ENCODE measurements at regions of chr12 and their contacts with region 1.

Region 1: GRCh38 chr12:123232807-123233543 is at the starts of genes MPHOSPH9 and MTRFR:
- DNase-seq: peak; percentile 96 to 100 (median 99)
- ATAC-seq: peak; percentile 86 to 90
- H3K4me3 Mint-ChIP-seq: peak within 1 kb of the TSS; percentile 96 to 100 (median 99)
- H3K27ac Mint-ChIP-seq: peak within 1 kb of the TSS; percentile 98 to 100 (median 99)
- H3K4me1 Mint-ChIP-seq: peaks cover 22 to 86% (median 71%) of the 10 kb centered on the region in 4 donors
- H3K27me3 Mint-ChIP-seq: peaks cover 0 to 2% (median 0%) of the 10 kb centered on the region in 5 donors
- polyA plus RNA-seq, gene MPHOSPH9: 33.9 to 53.4 (median 44.8) TPM
- polyA plus RNA-seq, gene MTRFR: 45.2 to 63.6 (median 56.5) TPM

Region 2: DNA sequence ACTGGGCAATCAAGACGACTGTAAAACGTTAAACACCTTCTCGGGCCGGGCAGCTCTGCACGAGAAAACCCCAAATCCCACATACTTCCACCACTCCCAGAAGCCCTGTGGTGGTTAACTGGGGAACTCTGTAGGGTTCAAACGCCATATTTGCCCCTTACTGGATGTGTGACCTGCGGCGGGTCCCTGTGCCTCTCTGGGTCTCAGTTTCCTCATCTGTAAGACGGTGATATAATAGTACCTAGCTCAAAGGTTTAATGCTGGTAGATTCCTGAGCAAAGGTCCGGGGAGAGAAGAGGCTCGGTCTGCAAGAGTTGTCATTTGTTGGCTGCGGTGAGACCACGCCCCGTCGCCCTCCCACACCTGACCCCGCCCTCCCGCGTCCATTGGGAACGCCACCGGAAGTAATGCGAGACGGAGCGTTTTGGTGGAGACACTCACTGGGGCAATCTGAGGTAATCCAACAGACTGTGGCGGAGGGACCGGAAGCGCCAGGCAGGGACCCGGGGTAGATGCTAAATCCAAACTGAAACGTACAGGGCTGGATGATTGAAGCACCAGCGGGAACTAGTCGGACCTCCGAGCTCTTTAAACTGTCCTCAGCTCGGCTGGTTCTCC is 258.6 kb before region 1 on chr12:
- POLR2A ChIA-PET with region 1: interaction called, 36 read pairs
- DNase-seq: peak; percentile 94 to 99 (median 98)
- ATAC-seq: peak; percentile 82 to 87
- H3K4me3 Mint-ChIP-seq: peak overlapping the region; percentile 92 to 99 (median 98)
- H3K27ac Mint-ChIP-seq: peak overlapping the region; percentile 97 to 100 (median 99)
- H3K4me1 Mint-ChIP-seq: peaks cover 6 to 40% (median 21%) of the 10 kb centered on the region in 4 donors
- H3K27me3 Mint-ChIP-seq: no peaks in the 10 kb centered on the region

Region 3: DNA sequence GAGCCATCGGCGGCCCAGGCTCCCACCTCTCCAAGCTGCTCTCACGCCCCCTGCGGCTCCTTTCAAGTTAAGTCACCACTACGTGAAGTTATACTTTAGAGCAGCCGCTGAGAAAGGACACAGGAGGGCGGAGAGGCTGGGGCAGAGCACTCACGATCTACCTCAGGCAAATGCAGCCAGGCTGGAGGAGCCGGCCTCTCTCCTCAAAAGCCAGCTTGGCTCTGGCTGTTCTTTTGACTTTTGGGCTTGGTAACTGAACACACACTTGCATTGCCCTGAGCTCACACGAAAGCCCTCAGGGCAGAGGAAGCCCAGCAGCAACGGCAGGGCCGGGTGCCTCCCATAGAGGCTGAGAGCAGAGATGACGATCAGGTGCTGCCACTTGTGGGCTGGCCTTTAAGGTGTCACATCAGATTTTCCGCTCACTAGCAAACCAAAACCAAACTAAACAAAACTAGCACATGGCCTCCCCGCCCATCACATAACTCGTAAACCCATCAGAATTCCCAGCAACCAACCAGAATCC is 157.3 kb before region 1 on chr12:
- POLR2A ChIA-PET with region 1: interaction called, 30 read pairs
- DNase-seq: peak; percentile 45 to 88 (median 73)
- ATAC-seq: peak; percentile 82 to 89
- H3K4me3 Mint-ChIP-seq: peak overlapping the region; percentile 82 to 98 (median 94)
- H3K27ac Mint-ChIP-seq: peak overlapping the region; percentile 94 to 99 (median 96)
- H3K4me1 Mint-ChIP-seq: peaks cover 35 to 78% (median 72%) of the 10 kb centered on the region in 4 donors
- H3K27me3 Mint-ChIP-seq: no peaks in the 10 kb centered on the region

Region 4: GRCh38 chr12:123120452-123121166 is 112.4 kb before region 1 on chr12:
- POLR2A ChIA-PET with region 1: interaction called, 32 read pairs
- DNase-seq: peak in 5 of 10 donors; percentile 23 to 77 (median 55)
- ATAC-seq: peak; percentile 61 to 79
- H3K4me3 Mint-ChIP-seq: peak overlapping the region; percentile 44 to 82 (median 66)
- H3K27ac Mint-ChIP-seq: peak overlapping the region; percentile 92 to 97 (median 96)
- H3K4me1 Mint-ChIP-seq: peaks cover 42 to 75% (median 73%) of the 10 kb centered on the region in 4 donors
- H3K27me3 Mint-ChIP-seq: no peaks in the 10 kb centered on the region

Region 5: DNA sequence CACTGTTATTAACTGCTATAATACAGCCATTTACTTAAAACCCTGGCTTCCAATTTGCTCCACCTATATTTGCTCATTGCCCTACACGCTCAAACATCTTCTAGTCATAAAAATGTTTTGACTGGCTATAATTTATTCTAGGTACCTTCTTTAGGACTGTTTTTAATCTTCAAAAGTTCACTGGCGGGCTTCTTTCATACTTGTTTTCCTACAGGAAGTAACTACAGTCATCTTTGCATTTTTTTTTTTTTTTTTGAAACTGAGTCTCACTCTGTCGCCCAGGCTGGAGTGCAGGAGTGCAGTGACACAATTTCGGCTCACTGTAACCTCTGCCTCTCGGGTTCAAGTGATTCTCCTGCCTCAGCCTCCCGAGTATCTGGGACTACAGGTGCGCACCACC is 32.6 kb before region 1 on chr12:
- POLR2A ChIA-PET with region 1: interaction called, 14 read pairs
- DNase-seq: peak in 3 of 10 donors; percentile 10 to 42 (median 31)
- ATAC-seq: peak; percentile 63 to 86
- H3K4me3 Mint-ChIP-seq: peak overlapping the region in 5 of 10 donors; percentile 3 to 59 (median 35)
- H3K27ac Mint-ChIP-seq: peak overlapping the region; percentile 80 to 97 (median 89)
- H3K4me1 Mint-ChIP-seq: peaks cover 5 to 20% (median 17%) of the 10 kb centered on the region in 4 donors
- H3K27me3 Mint-ChIP-seq: no peaks in the 10 kb centered on the region

Region 6: GRCh38 chr12:123365025-123365917 is 132.3 kb after region 1 on chr12:
- POLR2A ChIA-PET with region 1: interaction called, 24 read pairs
- DNase-seq: peak; percentile 96 to 99 (median 98)
- ATAC-seq: peak; percentile 76 to 84
- H3K4me3 Mint-ChIP-seq: peak overlapping the region; percentile 86 to 97 (median 91)
- H3K27ac Mint-ChIP-seq: peak overlapping the region; percentile 92 to 97 (median 96)
- H3K4me1 Mint-ChIP-seq: peaks cover 11 to 31% (median 26%) of the 10 kb centered on the region in 4 donors
- H3K27me3 Mint-ChIP-seq: no peaks in the 10 kb centered on the region